Right cardiac atrium (tissue), 5 donors: ENCODE measurements at regions of chr6 and their contacts with region 1.

Region 1: DNA sequence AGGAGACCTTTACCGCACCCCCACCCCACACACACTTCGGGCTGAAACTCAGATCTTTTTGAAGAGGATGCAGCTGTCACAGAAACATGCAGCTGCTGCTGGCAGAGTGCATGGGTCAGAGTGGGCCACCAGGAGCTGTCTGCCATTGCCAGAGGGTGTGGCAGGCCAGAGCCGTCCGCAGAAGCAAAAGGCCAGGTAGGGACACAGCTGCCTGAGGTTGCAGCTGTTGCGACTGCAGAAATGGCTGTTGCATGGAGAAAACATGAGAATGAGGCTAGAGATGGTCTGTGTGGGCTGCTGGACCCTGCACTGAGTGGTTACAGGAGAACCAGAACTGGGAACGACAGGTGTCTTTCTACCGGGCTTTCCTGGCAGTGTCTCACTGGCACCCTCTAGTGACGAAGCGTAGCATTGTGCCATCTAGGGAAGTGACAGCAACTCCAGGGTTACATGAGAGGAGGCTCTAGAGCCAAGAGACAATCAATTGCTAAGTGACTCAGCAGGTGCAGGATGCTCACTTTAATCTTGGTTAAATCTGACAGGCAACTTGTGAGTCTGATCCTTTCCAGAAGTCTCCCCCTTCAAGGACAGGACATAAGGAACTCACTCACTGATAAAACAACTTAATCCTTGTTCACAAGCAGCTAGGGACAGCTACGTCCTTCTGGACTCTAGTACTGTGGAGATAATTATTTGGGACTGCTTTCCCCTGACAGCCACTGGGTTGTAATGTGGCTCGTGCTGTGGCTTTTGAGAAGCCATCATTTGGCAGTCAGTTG is 29.1 kb upstream of the SERPINB9 start:
- DNase-seq: peak; percentile 72 to 92 (median 86)
- ATAC-seq: peak; percentile 92 to 94
- H3K4me3 ChIP-seq: no peak overlapping the region
- H3K27ac ChIP-seq: peak overlapping the region; percentile 31
- H3K4me1 ChIP-seq: peaks cover 3% of the 10 kb centered on the region
- H3K27me3 ChIP-seq: no peaks in the 10 kb centered on the region

Region 2: GRCh38 chr6:2714111-2714895 is 217.9 kb before region 1 on chr6:
- intact Hi-C with region 1: no loop called
- DNase-seq: no peak
- ATAC-seq: peak; percentile 18 to 79
- H3K4me3 ChIP-seq: no peak overlapping the region
- H3K27ac ChIP-seq: peak overlapping the region; percentile 23
- H3K4me1 ChIP-seq: peaks cover 3% of the 10 kb centered on the region
- H3K27me3 ChIP-seq: no peaks in the 10 kb centered on the region

Region 3: GRCh38 chr6:2791124-2791974 is 140.8 kb before region 1 on chr6:
- intact Hi-C with region 1: loop called in 2 of 4 experiments (anchors 10 kb)
- DNase-seq: peak; percentile 61 to 80 (median 72)
- ATAC-seq: peak; percentile 85 to 87
- H3K4me3 ChIP-seq: no peak overlapping the region
- H3K27ac ChIP-seq: no peak overlapping the region
- H3K4me1 ChIP-seq: peaks cover 5% of the 10 kb centered on the region
- H3K27me3 ChIP-seq: no peaks in the 10 kb centered on the region

Region 4: DNA sequence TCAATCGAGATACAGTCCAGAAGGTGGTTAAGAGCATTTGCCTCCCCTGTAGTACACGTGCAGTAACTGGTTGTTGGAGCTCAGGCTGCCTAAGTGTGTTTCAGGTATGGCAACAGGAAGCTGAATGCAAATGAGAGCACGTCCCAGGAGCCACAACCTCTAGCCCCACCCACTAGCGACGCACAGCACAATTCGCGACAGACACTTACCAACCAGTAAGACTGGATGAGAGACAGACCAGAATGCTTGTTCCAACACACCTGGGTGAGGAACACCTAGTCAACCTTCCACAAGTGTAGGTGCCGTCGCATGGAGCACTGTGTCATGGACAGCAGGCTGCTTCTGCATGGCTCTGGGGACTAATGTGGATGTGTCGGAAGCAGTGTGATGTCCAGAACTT is 83.3 kb before region 1 on chr6:
- intact Hi-C with region 1: loop called in 3 of 4 experiments (anchors 5 kb)
- DNase-seq: no peak
- ATAC-seq: no peak
- H3K4me3 ChIP-seq: no peak overlapping the region
- H3K27ac ChIP-seq: no peak overlapping the region
- H3K4me1 ChIP-seq: peaks cover 5% of the 10 kb centered on the region
- H3K27me3 ChIP-seq: no peaks in the 10 kb centered on the region

Region 5: DNA sequence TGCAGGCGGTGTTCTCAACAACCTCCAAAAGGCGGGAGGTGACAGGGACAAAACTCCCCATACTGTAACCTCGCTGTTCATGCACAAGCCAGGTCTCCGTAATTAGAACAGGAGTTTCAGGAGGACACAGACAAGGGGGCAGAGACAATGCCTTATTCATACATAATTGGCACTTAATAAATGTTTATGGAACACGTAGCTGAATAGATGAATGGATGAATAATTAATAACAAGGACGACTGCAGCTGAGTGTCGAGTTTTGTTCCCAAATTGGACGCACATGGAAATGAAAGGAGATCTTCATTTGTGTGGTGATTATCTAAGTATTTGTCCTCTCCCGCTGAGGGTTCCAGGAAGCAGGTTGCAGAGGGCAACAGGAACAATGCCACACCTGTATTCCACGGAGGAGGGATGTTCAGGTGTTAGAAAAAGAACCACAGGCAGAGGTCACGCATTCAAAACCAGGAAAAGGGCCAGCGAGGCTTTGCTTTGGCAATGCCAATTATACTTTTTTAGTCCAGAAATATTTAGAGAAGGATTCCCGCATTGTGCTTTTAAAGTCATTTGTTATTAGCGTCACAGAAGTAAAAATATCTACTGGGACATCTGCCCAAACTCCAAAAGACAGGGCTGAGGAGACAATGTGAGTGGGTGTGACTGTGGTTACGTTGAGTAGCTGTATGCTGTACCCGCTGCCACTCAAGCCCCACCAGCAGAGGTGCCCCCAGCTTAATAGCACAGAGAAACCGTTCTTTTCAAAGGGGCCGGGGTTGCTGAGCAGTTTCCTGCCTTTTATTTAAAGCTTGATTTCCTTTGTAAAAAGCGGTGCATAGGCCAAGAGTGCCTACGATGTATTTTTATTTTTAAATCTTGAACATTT is 696.0 kb after region 1 on chr6:
- intact Hi-C with region 1: no loop called
- DNase-seq: no peak
- ATAC-seq: no peak
- H3K4me3 ChIP-seq: no peak overlapping the region
- H3K27ac ChIP-seq: no peak overlapping the region
- H3K4me1 ChIP-seq: no peaks in the 10 kb centered on the region
- H3K27me3 ChIP-seq: no peaks in the 10 kb centered on the region

Region 6: DNA sequence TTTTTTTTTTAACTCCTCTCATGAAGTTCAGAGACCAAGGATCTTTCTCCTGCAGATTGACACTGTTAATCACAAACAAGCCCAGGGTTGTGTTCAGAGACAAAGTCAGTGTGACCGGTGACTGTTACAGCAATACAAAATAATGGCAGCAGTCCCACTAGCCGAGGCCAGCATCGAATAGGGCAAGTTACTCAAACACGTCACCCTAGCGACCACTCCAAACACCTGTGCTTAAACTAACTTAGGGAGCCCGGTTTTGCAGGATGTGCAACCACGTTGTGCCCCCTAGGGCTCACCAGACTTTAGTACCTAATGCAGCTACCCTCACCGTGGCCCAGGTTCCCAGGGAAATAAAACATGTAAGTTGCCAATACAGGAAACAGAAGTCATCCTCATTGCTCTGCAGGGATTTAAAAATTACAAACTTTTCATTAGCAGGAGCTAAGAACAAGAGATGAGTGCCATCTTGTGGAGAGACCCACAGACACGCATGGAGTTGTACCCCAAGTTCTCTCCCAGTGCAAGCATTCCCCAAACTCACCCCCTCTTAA is 955.1 kb after region 1 on chr6:
- intact Hi-C with region 1: no loop called
- DNase-seq: no peak
- ATAC-seq: peak; percentile 45 to 52
- H3K4me3 ChIP-seq: no peak overlapping the region
- H3K27ac ChIP-seq: no peak overlapping the region
- H3K4me1 ChIP-seq: peaks cover 5% of the 10 kb centered on the region
- H3K27me3 ChIP-seq: no peaks in the 10 kb centered on the region